ENCODE measurements at regions of chr20 and their contacts with region 1.

Region 1: DNA sequence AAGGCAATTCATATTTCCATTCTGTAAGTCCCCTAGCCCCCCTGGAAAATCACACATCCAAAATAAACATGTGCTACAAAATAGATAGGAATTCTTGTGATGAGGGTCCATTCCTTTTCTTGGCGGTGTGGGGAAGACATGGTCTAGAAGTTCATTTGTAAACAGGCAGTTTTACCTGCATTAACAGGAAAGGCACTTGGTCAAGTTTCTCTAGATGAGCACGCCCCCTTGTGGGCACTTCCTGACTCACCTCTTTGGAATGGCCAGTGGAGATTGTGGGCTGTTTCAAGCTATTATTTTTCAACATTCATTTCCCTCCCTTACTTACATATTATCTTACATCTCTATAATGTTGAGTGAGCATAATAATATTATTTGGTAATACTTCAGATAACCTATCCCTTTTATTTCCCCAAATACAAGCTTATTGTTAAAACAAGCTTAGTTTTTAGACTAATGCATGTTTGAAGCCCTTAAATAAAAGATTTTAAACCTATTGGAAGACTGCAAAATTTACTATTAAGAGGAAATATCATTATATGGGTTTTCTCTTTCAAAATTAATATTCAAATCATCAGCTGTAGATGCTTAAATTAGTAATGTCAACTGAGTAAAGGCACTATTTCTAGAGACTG is 92.1 kb downstream of the TASP1 start:
- DNase-seq: peak; percentile 9
- H3K4me3 ChIP-seq: no peak overlapping the region
- H3K27me3 ChIP-seq: no peaks in the 10 kb centered on the region
- CTCF ChIP-seq: peak; percentile 68

Region 2: DNA sequence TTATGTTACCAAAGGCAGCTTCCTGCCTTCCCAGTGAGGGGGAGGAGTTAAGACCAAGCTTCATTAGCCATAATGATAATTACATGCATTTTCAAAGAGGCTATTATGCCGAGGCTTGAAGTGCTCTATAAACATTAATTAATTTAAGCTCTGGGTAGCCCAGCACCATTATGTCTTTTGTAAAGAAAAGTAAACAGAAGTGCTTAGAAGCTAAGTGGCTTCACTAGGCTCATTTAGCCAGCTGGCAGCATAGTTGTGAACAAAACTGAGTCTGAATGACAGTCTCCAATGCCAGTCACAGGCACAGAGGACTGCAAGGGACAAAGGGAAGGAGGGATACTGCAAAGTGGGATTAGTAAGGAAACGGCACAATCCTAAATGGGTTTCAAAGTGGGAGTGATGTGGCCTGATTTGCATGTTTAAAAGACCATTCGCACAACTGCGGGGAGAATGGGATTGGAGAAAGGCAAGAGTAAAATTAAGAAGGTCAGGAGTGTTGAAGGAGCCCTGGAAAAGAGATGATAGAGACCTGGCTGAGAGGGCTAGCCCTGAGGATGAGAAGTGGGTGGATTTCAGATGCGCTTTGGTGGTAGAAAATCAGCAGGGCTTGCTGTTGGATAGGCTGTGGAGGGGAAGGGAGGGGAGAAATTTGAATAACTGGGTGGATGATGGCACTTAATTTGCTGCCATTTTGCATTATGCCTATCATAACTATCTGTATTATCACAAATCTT is 345.7 kb before region 1 on chr20:
- CTCF ChIA-PET with region 1: no interaction called
- POLR2A ChIA-PET with region 1: no interaction called
- DNase-seq: no peak
- H3K4me3 ChIP-seq: no peak overlapping the region
- H3K27me3 ChIP-seq: peaks cover 1% of the 10 kb centered on the region; the same call in 1 of the 2 replicates
- CTCF ChIP-seq: no peak

Region 3: GRCh38 chr20:13302647-13303450 is 243.8 kb before region 1 on chr20:
- CTCF ChIA-PET with region 1: interaction called, 11 read pairs
- POLR2A ChIA-PET with region 1: no interaction called
- DNase-seq: no peak
- H3K4me3 ChIP-seq: no peak overlapping the region
- H3K27me3 ChIP-seq: no peaks in the 10 kb centered on the region
- CTCF ChIP-seq: peak; percentile 75

Region 4: DNA sequence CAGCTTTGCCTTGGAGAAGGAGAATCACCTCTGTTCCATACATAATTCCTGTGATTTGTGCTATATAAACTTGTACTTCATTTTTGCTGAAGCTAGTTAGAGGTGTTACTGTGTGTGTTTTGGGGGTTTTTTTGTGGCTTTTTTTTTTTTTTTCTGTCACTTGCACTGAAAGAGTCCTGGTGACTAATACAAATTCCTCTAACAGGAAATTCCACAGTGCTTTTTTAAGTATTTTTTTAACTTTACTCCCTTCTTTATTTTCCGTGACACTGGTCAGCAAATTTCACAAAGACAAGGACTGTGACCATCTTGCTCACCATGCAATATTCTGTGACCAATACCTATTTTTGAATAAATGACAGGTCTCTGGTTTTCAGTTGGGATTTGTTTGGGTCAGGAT is 215.1 kb before region 1 on chr20:
- CTCF ChIA-PET with region 1: interaction called, 12 read pairs
- POLR2A ChIA-PET with region 1: no interaction called
- DNase-seq: no peak
- H3K4me3 ChIP-seq: no peak overlapping the region
- H3K27me3 ChIP-seq: peaks cover 2% of the 10 kb centered on the region
- CTCF ChIP-seq: no peak

Region 5: GRCh38 chr20:13458860-13459451 is 87.7 kb before region 1 on chr20:
- CTCF ChIA-PET with region 1: interaction called, 25 read pairs
- POLR2A ChIA-PET with region 1: interaction called, 3 read pairs
- DNase-seq: no peak
- H3K4me3 ChIP-seq: no peak overlapping the region
- H3K27me3 ChIP-seq: no peaks in the 10 kb centered on the region
- CTCF ChIP-seq: peak; percentile 74

Region 6: DNA sequence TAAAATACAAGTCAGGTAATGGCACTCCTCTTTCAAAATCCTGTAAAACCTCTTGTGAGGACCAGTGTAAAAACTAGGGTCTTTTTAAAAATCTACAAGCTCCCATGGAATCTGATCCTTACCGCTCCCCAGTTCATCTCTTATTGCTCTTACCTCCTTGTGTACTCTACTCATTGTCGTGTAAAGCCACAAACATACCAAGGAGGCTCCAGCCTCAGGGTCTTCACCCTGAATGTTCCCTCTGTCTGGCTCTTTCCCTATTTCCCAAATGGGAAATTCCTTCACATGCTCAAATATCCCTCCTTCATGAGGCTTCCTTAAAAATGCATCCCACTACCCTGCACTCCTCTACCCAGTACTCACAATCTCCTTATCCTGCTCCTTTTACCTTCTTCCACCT is 25.0 kb after region 1 on chr20:
- CTCF ChIA-PET with region 1: no interaction called
- POLR2A ChIA-PET with region 1: no interaction called
- DNase-seq: no peak
- H3K4me3 ChIP-seq: no peak overlapping the region
- H3K27me3 ChIP-seq: no peaks in the 10 kb centered on the region
- CTCF ChIP-seq: no peak

Measured in BJ (cell line).